ENCODE measurements at regions of chr16 and their contacts with region 1.

Region 1: GRCh38 chr16:85554112-85554813 is 58.9 kb upstream of the GSE1 start:
- DNase-seq: peak; percentile 80
- ATAC-seq: peak; percentile 56
- H3K4me3 ChIP-seq: peak overlapping the region; percentile 75 to 83
- H3K27ac ChIP-seq: peak overlapping the region; percentile 64
- H3K4me1 ChIP-seq: peaks cover 54 to 68% of the 10 kb centered on the region in 2 experiments
- H3K27me3 ChIP-seq: no peaks in the 10 kb centered on the region
- CTCF ChIP-seq: no peak
- POLR2A ChIP-seq: peak; percentile 42
- RAD21 ChIP-seq: no peak

Region 2: GRCh38 chr16:85528528-85529387 is 25.5 kb before region 1 on chr16:
- CTCF ChIA-PET with region 1: interaction called, 10 read pairs
- POLR2A ChIA-PET with region 1: no interaction called
- RAD21 ChIA-PET with region 1: no interaction called
- intact Hi-C with region 1: loop called (anchors 2 kb)
- DNase-seq: no peak
- ATAC-seq: peak; percentile 70
- H3K4me3 ChIP-seq: no peak overlapping the region
- H3K27ac ChIP-seq: no peak overlapping the region
- H3K4me1 ChIP-seq: peaks cover 10 to 17% of the 10 kb centered on the region in 2 experiments; a peak in 3 of 4 replicates
- H3K27me3 ChIP-seq: no peaks in the 10 kb centered on the region
- CTCF ChIP-seq: peak in 2 of 3 experiments; percentile 74; a peak in 4 of 6 replicates
- POLR2A ChIP-seq: no peak
- RAD21 ChIP-seq: no peak

Region 3: DNA sequence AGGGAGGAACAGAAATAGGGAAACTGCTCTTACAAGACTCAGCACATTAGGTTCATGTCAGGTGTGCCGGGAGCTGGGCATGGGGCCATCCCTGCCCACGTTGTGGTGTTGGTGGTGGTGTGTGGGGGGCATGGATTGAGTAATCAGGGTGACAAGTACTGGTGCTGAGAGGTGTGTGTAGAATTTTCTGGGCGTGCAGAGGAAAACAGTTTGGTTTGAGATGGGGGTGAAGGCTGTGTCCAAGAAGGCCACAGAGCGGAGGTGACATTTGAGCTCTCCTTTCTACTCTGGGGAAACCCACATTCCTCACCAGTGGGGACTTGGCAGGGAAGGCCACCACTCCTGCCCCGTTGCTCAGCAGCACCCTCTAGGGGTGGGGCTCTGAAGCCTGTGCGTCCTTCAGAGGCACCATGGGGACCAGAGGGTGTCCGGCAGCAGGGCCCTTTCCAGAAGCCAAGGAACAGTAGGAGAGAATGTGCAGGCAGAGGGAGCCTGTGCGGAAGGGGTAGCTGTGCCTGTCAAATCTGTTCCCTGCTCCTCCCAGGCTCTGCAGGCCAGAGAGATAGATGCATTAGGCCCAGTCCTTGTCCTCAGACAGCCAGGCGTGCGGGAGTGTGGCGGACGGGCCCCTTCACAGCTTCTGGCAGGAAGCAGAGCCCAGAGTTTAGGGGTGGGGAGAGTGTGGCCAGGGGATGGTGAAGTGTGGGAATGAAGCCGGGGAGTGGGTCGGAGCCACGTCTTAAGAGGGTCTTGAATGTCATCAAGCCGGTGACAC is 10.2 kb after region 1 on chr16:
- CTCF ChIA-PET with region 1: interaction called, 14 read pairs
- POLR2A ChIA-PET with region 1: interaction called, 4 read pairs
- RAD21 ChIA-PET with region 1: no interaction called
- intact Hi-C with region 1: no loop called
- DNase-seq: no peak
- ATAC-seq: peak; percentile 73
- H3K4me3 ChIP-seq: no peak overlapping the region
- H3K27ac ChIP-seq: no peak overlapping the region
- H3K4me1 ChIP-seq: peaks cover 13 to 30% of the 10 kb centered on the region in 2 experiments
- H3K27me3 ChIP-seq: no peaks in the 10 kb centered on the region
- CTCF ChIP-seq: peak in 2 of 3 experiments; percentile 90 to 94; a peak in 4 of 6 replicates
- POLR2A ChIP-seq: no peak
- RAD21 ChIP-seq: no peak

Region 4: DNA sequence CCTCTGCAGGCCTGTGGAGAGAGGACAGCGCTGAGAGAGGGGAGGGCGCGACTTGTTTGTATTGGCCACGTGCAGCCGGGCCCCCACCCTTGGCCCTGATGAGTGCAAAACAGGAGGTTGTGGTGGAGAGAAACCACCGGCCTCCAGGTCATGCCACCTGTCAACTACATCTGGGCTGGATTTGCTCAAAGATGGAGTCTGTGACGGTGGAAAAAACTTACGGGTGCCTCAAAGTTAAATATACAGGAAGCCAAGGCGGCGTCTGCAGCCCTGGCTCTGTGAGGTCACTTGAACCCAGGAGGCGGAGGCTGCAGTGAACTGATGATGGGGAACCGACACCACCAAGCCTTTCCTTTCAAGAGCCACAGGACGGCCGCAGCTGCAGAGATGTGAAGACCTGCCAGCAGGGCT is 181.0 kb after region 1 on chr16:
- CTCF ChIA-PET with region 1: no interaction called
- POLR2A ChIA-PET with region 1: no interaction called
- RAD21 ChIA-PET with region 1: no interaction called
- intact Hi-C with region 1: no loop called
- DNase-seq: no peak
- ATAC-seq: no peak
- H3K4me3 ChIP-seq: no peak overlapping the region
- H3K27ac ChIP-seq: no peak overlapping the region
- H3K4me1 ChIP-seq: no peaks in the 10 kb centered on the region
- H3K27me3 ChIP-seq: no peaks in the 10 kb centered on the region
- CTCF ChIP-seq: no peak
- POLR2A ChIP-seq: no peak
- RAD21 ChIP-seq: no peak